ENCODE measurements at regions of chr9 and their contacts with region 1.

Region 1: DNA sequence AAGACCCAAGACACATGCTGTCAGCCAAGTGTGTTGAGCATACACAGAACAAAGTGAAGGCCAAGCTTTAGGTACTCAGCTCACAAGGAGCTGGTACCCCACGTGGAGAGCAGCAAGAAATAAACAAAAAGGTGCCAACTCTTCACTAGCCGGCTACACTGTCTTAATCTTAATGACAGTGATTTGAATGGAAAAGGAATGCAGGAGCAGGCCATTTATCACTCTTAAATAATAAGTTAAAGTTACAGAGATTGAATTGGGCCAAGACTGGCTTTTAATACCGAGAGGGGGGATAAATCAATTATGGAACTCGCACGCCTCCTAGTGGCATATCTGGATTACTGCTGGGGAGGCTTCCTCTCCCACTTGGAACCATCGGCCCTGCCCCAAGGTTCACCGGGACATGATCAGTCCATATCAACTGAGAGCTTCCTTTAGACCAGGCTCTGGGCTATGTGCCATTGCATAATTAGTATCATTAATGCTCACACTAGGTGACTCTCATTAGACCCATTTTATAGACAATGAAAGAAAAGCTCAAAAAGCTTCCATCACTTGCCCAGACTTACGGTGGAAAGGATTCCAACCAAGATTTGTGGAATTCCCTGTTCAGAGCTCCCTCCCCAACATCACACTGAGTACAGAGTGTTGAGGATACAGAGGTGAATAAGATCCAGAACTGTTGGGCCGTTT is 94.0 kb downstream of the ACTL7B start:
- DNase-seq: peak; percentile 43
- H3K4me3 ChIP-seq: no peak overlapping the region
- H3K27ac ChIP-seq: no peak overlapping the region
- H3K4me1 ChIP-seq: no peaks in the 10 kb centered on the region
- H3K27me3 ChIP-seq: peaks cover 0 to 1% of the 10 kb centered on the region in 2 experiments
- CTCF ChIP-seq: peak; percentile 80 to 81
- POLR2A ChIP-seq: no peak

Region 2: DNA sequence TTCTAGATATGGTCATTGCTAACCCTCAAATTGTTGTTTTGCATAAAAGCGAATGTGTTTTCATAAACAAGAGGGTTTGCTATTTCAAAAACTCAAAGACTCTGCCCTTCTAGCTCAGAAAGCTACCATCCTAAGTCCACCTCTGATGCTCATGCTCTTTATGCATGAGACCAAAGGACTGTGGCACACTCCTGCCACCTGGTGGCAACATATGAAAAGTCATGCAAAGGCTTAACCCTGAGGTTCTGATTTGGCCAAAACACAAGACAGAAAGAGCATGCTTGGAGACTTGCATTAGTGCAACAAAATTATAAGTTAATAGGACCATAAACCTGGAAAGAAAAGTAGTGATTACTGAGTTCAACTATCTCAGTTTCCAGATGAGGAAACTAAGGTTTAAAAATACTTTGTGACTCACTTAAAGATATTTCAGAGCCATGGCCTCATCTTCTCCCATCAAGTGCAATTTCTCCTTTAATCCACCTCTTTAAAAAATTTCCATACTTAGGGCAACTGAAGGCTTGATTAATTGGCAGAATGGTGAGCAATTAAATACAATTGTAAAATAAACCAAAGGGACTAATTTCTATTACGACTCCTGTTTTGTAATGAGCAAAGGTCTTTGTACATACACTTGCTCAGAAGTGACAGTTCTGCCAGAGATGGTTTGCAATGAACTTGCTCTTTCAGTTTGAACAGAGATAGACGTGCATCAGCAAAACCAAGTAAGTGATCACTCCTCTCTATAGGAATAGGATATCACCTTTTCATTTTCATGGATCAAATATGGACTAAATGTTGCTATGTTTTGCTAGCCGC is 1589.4 kb before region 1 on chr9:
- CTCF ChIA-PET with region 1: no interaction called
- POLR2A ChIA-PET with region 1: no interaction called
- dilution Hi-C with region 1: no loop called
- intact Hi-C with region 1: loop called (anchors 5 kb)
- DNase-seq: peak; percentile 77
- H3K4me3 ChIP-seq: no peak overlapping the region
- H3K27ac ChIP-seq: no peak overlapping the region
- H3K4me1 ChIP-seq: no peaks in the 10 kb centered on the region
- H3K27me3 ChIP-seq: no peaks in the 10 kb centered on the region
- CTCF ChIP-seq: peak; percentile 69 to 74
- POLR2A ChIP-seq: no peak

Region 3: DNA sequence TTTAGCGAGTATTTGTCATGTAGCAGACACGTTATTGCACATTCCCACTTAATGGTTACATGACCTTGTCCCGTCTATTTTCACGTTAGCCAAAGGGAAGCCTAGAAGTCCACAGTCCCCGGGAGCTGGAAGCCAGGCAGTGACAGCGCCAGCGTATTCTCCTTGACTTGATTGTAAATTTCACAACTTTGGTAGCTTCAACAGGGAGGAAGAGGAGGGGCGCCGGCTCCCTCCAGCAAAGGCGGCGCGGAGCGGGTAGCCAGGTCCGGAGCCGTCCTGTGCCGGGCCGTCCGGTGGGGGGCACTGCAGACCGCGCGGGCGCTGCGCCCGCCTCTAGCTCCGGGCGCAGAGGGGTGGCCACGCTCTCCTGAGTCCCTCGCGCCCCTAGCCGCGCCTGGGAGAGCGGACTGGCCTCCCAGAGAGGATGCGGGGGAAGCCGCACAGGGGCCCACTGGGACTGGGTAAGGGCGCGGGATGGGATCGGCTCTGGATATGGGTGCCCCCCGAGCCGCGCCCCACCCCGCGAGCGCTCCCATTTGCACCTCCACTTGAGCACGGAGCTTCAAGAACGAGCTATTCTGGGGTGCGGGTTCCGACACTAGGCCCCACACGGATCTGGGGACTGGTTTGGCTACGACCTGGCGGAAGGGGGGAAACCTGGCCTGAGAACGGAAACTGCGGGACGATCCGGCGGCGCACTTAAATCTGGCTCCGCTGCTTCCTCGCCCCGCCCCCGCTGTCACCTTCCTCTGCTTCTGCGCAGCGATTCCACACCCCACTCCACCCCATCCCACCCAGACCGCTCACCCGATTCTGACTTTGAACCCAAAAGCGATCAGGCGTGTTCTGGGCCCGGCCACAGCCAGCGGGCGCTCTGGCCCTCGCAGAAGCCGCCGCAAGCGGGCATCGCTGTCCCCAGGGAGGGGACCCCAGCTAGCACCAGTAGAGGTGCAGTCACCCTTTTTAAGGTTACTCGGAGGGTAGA is 1296.0 kb before region 1 on chr9:
- CTCF ChIA-PET with region 1: interaction called, 56 read pairs
- POLR2A ChIA-PET with region 1: no interaction called
- dilution Hi-C with region 1: no loop called
- intact Hi-C with region 1: loop called (anchors 1 kb)
- DNase-seq: peak; percentile 47
- H3K4me3 ChIP-seq: peak overlapping the region; percentile 32 to 57 (median 46)
- H3K27ac ChIP-seq: no peak overlapping the region
- H3K4me1 ChIP-seq: peaks cover 3% of the 10 kb centered on the region
- H3K27me3 ChIP-seq: peaks cover 0 to 3% of the 10 kb centered on the region in 2 experiments
- CTCF ChIP-seq: peak; percentile 86 to 88
- POLR2A ChIP-seq: no peak

Region 4: DNA sequence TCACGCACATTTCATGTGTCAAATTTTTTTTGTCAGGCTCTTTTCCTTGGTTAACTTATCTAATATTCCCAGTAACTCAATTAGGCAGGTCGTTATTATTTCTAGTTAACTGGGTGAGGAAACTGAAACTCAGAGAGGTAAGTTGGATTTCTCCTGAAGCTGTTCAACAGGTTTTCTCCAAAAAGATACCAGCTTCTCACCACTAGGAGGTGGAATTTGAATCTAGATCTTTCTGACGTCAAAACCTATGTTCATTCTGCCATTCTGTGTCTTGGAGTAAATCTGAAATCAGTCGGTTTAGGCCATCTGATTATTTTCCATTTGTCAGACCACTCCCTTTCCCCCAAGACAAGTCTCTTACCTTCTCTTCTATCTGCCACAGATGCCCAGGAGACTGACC is 478.9 kb before region 1 on chr9:
- CTCF ChIA-PET with region 1: interaction called, 6 read pairs
- POLR2A ChIA-PET with region 1: no interaction called
- dilution Hi-C with region 1: no loop called
- intact Hi-C with region 1: loop called (anchors 5 kb)
- DNase-seq: no peak
- H3K4me3 ChIP-seq: no peak overlapping the region
- H3K27ac ChIP-seq: no peak overlapping the region
- H3K4me1 ChIP-seq: no peaks in the 10 kb centered on the region
- H3K27me3 ChIP-seq: no peaks in the 10 kb centered on the region
- CTCF ChIP-seq: peak in 1 of 2 donors; percentile 27
- POLR2A ChIP-seq: no peak

Region 5: GRCh38 chr9:108813951-108814601 is 52.3 kb after region 1 on chr9:
- CTCF ChIA-PET with region 1: interaction called, 11 read pairs
- POLR2A ChIA-PET with region 1: no interaction called
- dilution Hi-C with region 1: no loop called
- intact Hi-C with region 1: no loop called
- DNase-seq: peak; percentile 75
- H3K4me3 ChIP-seq: no peak overlapping the region
- H3K27ac ChIP-seq: no peak overlapping the region
- H3K4me1 ChIP-seq: peaks cover 4% of the 10 kb centered on the region
- H3K27me3 ChIP-seq: no peaks in the 10 kb centered on the region
- CTCF ChIP-seq: peak; percentile 38 to 64
- POLR2A ChIP-seq: no peak

Measured in endothelial cell of umbilical vein (primary cell).